Dorsolateral prefrontal cortex (tissue), 120 donors: ENCODE measurements at regions of chr20 and their contacts with region 1.

Region 1: GRCh38 chr20:3358676-3359340 is 48.7 kb downstream of the DNAAF9 start:
- DNase-seq: no peak
- H3K4me3 ChIP-seq: no peak overlapping the region
- H3K27ac ChIP-seq: peak overlapping the region in 1 of 59 donors; percentile 16
- H3K27me3 ChIP-seq: no peaks in the 10 kb centered on the region
- CTCF ChIP-seq: peak in 13 of 56 donors; percentile 8 to 40 (median 20)

Region 2: DNA sequence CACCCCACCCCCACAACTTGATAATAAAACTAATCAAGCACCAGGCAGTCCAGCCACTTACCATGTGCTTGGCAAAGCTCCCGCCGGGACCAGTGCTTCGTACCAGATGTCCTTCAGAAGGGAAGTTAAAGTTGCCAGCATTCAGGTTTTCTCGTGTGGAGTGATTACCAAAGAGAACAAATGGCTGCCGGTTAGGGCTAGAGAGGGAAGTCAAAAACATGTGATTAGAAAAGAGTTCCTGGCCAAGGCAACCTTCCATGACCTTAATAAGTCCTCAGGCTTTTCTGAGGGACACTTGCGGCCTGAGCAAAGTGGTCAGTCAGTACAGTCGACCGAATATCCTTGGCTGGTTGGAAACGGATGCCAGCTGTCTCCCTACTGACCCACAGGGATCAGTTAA is 18.4 kb before region 1 on chr20:
- intact Hi-C with region 1: no loop called
- DNase-seq: peak in 4 of 10 donors; percentile 40 to 60 (median 48)
- H3K4me3 ChIP-seq: no peak overlapping the region
- H3K27ac ChIP-seq: peak overlapping the region in 43 of 59 donors; percentile 0 to 73 (median 50)
- H3K27me3 ChIP-seq: no peaks in the 10 kb centered on the region
- CTCF ChIP-seq: no peak

Region 3: DNA sequence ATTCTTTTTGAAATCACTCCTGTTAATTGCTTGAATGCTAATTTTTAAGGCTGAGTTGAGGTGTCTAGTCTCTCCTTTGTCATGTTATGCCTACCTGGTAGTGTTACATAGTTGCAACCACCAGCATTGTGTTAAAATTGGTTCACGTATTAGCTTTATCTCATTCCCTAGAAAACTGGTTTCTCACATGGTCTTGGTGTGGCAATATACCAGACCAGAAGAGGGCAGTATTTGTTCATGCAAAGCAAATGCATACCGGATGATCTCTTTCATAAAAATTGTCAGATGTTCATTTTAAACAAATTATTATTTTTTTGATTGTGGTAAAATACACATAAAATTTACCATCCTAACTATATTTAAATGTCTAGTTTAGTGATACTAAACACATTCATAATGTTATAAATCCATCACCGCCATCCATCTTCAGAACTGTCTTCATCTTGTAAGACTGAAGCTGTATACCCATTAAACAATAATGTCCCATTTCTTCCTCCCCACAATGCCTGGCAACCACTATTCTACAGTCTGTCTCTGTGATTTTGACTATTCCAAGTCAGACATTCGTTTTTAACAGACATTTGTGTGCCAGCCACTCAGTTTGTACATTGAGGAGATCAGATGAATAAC is 204.9 kb after region 1 on chr20:
- intact Hi-C with region 1: loop called in 1 of 2 experiments (anchors 10 kb)
- DNase-seq: no peak
- H3K4me3 ChIP-seq: no peak overlapping the region
- H3K27ac ChIP-seq: no peak overlapping the region
- H3K27me3 ChIP-seq: no peaks in the 10 kb centered on the region
- CTCF ChIP-seq: peak; percentile 47 to 85 (median 72)

Region 4: DNA sequence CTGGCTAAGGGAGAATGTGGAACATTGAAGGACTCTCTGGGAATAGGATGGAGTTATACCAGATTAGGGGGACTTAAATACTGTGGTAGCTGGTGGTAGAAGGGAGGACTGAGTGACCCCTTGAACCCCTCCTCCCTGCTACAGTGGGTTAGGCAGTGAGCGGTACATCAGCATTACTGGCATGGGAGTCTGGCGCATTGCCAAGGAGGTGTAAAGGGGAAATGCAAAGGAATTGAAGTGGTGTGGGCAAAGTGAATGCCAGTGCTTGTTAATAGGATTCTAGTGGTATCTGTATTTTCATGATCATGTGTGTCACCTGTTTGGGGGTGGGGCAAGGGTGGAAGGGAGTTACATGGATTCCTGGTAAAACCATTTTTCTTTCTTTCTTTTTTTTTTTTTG is 244.3 kb after region 1 on chr20:
- intact Hi-C with region 1: no loop called
- DNase-seq: no peak
- H3K4me3 ChIP-seq: no peak overlapping the region
- H3K27ac ChIP-seq: no peak overlapping the region
- H3K27me3 ChIP-seq: no peaks in the 10 kb centered on the region
- CTCF ChIP-seq: no peak